ENCODE measurements at regions of chr13 and their contacts with region 1.

Region 1: GRCh38 chr13:44917589-44918325 is 71.5 kb downstream of the NUFIP1 start:
- DNase-seq: peak; percentile 95 to 99 (median 98)
- ATAC-seq: peak; percentile 77
- H3K4me3 ChIP-seq: peak overlapping the region; percentile 62
- H3K4me3 Mint-ChIP-seq: no peak overlapping the region
- H3K27ac ChIP-seq: peak overlapping the region; percentile 84 to 91
- H3K27ac Mint-ChIP-seq: no peak overlapping the region
- H3K4me1 ChIP-seq: peaks cover 19% of the 10 kb centered on the region
- H3K4me1 Mint-ChIP-seq: peaks cover 5% of the 10 kb centered on the region
- H3K27me3 ChIP-seq: no peaks in the 10 kb centered on the region
- H3K27me3 Mint-ChIP-seq: no peaks in the 10 kb centered on the region
- CTCF ChIP-seq: no peak

Region 2: GRCh38 chr13:44274452-44275205 is 643.1 kb before region 1 on chr13:
- CTCF ChIA-PET with region 1: no interaction called
- POLR2A ChIA-PET with region 1: interaction called, 3 read pairs
- intact Hi-C with region 1: loop called in 1 of 2 experiments (anchors 10 kb)
- DNase-seq: peak in 10 of 14 experiments; percentile 2 to 91 (median 27)
- ATAC-seq: peak; percentile 95
- H3K4me3 ChIP-seq: peak overlapping the region; percentile 42
- H3K4me3 Mint-ChIP-seq: peak overlapping the region; percentile 36
- H3K27ac ChIP-seq: peak overlapping the region; percentile 65 to 85
- H3K27ac Mint-ChIP-seq: peak overlapping the region; percentile 95
- H3K4me1 ChIP-seq: peaks cover 24% of the 10 kb centered on the region
- H3K4me1 Mint-ChIP-seq: peaks cover 47% of the 10 kb centered on the region
- H3K27me3 ChIP-seq: no peaks in the 10 kb centered on the region
- H3K27me3 Mint-ChIP-seq: no peaks in the 10 kb centered on the region
- CTCF ChIP-seq: no peak

Region 3: GRCh38 chr13:44988973-44989817 is 71.4 kb after region 1 on chr13 and contains the starts of genes GPALPP1 and NUFIP1:
- CTCF ChIA-PET with region 1: interaction called, 4 read pairs
- POLR2A ChIA-PET with region 1: interaction called, 5 read pairs
- intact Hi-C with region 1: loop called (anchors 1 kb)
- DNase-seq: peak; percentile 79 to 96 (median 89)
- ATAC-seq: peak; percentile 98
- H3K4me3 ChIP-seq: peak within 1 kb of the TSS; percentile 83
- H3K4me3 Mint-ChIP-seq: peak within 1 kb of the TSS; percentile 99
- H3K27ac ChIP-seq: peak within 1 kb of the TSS; percentile 75 to 87
- H3K27ac Mint-ChIP-seq: peak within 1 kb of the TSS; percentile 92
- H3K4me1 ChIP-seq: peaks cover 30% of the 10 kb centered on the region
- H3K4me1 Mint-ChIP-seq: peaks cover 65% of the 10 kb centered on the region
- H3K27me3 ChIP-seq: no peaks in the 10 kb centered on the region
- H3K27me3 Mint-ChIP-seq: no peaks in the 10 kb centered on the region
- CTCF ChIP-seq: no peak
- total RNA-seq, gene GPALPP1: 18.9 to 20.8 TPM
- total RNA-seq, gene NUFIP1: 4.3 to 4.4 TPM

Region 4: GRCh38 chr13:45310341-45311125 is 392.8 kb after region 1 on chr13:
- CTCF ChIA-PET with region 1: no interaction called
- POLR2A ChIA-PET with region 1: no interaction called
- intact Hi-C with region 1: loop called in 1 of 2 experiments (anchors 10 kb)
- DNase-seq: no peak
- ATAC-seq: no peak
- H3K4me3 ChIP-seq: peak overlapping the region; percentile 63
- H3K4me3 Mint-ChIP-seq: peak overlapping the region; percentile 85
- H3K27ac ChIP-seq: no peak overlapping the region
- H3K27ac Mint-ChIP-seq: no peak overlapping the region
- H3K4me1 ChIP-seq: peaks cover 24% of the 10 kb centered on the region
- H3K4me1 Mint-ChIP-seq: peaks cover 20% of the 10 kb centered on the region
- H3K27me3 ChIP-seq: no peaks in the 10 kb centered on the region
- H3K27me3 Mint-ChIP-seq: peaks cover 8% of the 10 kb centered on the region
- CTCF ChIP-seq: no peak

Region 5: GRCh38 chr13:46052319-46053161 is 1134.8 kb after region 1 on chr13 and contains the start of gene ZC3H13:
- CTCF ChIA-PET with region 1: no interaction called
- POLR2A ChIA-PET with region 1: no interaction called
- intact Hi-C with region 1: loop called in 1 of 2 experiments (anchors 5 kb)
- DNase-seq: peak; percentile 87 to 98 (median 89)
- ATAC-seq: peak; percentile 96
- H3K4me3 ChIP-seq: peak within 1 kb of the TSS; percentile 84
- H3K4me3 Mint-ChIP-seq: peak within 1 kb of the TSS; percentile 91
- H3K27ac ChIP-seq: peak within 1 kb of the TSS; percentile 97
- H3K27ac Mint-ChIP-seq: peak within 1 kb of the TSS; percentile 86
- H3K4me1 ChIP-seq: peaks cover 2% of the 10 kb centered on the region
- H3K4me1 Mint-ChIP-seq: peaks cover 53% of the 10 kb centered on the region
- H3K27me3 ChIP-seq: peaks cover 0 to 10% of the 10 kb centered on the region in 2 experiments
- H3K27me3 Mint-ChIP-seq: peaks cover 22% of the 10 kb centered on the region
- CTCF ChIP-seq: peak; percentile 48
- total RNA-seq, gene ZC3H13: 36.5 to 43.8 TPM

Region 6: DNA sequence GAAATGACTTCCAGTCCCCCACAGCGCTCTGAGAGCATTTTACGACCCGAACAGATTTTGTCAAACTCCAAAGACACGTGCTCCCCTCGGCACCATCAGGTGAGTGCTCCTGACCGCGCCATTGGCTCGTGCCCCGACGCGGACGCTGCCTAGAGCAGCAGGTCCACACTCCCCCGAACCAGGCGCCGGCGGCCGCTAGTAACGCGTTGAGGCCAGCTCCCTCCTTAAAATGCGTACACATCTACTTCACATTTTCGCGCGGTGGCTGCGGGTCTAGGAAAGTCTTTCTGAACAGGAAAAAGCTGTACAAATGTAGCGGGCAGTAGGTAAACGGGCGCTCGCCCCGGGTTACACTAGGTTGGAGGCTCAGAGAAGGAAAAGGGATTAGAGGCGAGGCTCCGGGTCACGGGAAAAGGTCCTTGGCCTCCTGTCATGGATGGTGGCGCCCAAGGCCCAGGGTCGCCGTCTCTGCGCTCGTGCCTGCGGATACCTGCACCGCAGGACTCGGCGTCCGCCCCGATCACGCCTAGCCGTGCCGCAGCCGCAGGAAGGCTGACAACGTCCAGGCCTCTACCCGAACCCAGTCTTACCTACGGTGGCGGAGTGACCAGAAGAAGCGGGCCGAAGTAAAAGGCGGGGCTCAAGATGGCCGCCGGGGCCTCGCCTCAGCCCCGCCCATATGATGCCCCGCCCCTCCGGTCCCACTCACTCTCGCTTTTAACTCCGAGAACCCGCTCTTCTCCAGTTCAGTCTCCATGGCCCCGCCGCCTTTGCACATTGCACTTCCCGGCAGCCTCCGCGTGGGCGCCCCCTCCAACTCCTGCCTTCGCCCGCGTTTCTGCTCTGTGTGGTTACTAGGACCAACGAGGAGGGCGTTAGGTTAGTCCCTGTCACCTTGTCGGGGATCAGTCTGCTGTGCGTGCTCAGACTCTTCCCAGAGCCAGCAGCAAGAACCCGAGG is 1879.0 kb after region 1 on chr13 and contains the start of gene ESD:
- CTCF ChIA-PET with region 1: no interaction called
- POLR2A ChIA-PET with region 1: no interaction called
- intact Hi-C with region 1: loop called in 1 of 2 experiments (anchors 5 kb)
- DNase-seq: peak; percentile 80 to 96 (median 88)
- ATAC-seq: peak; percentile 93
- H3K4me3 ChIP-seq: peak within 1 kb of the TSS; percentile 93
- H3K4me3 Mint-ChIP-seq: peak within 1 kb of the TSS; percentile 89
- H3K27ac ChIP-seq: peak within 1 kb of the TSS; percentile 71 to 83
- H3K27ac Mint-ChIP-seq: peak within 1 kb of the TSS; percentile 94
- H3K4me1 ChIP-seq: peaks cover 25% of the 10 kb centered on the region
- H3K4me1 Mint-ChIP-seq: peaks cover 43% of the 10 kb centered on the region
- H3K27me3 ChIP-seq: no peaks in the 10 kb centered on the region
- H3K27me3 Mint-ChIP-seq: no peaks in the 10 kb centered on the region
- CTCF ChIP-seq: no peak
- total RNA-seq, gene ESD: 30.8 to 34.1 TPM

Measured in CD4-positive, alpha-beta T cell (primary cell).